HEK293 (cell line): ENCODE measurements at regions of chr1 and their contacts with region 1.

Region 1: DNA sequence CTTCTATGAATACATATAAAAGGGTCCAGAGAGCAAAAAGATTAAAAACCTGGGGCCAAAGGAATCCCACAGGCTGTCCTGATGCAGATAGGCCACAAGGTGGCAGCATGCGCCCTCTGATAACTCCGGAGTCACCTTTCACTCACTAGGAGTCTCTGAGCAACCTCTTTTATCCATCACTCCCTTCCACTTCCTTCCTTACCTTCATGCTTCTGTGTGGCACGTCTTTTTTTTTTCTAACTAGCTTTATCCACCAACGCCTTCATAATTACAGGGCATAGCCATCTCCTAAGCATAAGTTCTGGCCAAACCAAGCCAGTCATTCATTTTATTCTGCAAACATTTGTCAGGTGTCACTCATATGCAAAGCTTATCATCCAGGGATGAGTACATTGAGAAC is 3.9 kb upstream of the PGLYRP4 start:
- H3K4me3 ChIP-seq: no peak overlapping the region
- H3K27ac ChIP-seq: no peak overlapping the region
- H3K4me1 ChIP-seq: no peaks in the 10 kb centered on the region
- CTCF ChIP-seq: peak; percentile 52; the same call in 1 of the 2 replicates

Region 2: GRCh38 chr1:153312570-153313193 is 39.8 kb before region 1 on chr1 and contains the start of gene PGLYRP3:
- CTCF ChIA-PET with region 1: interaction called, 11 read pairs
- POLR2A ChIA-PET with region 1: no interaction called
- H3K4me3 ChIP-seq: no peak within 1 kb of the TSS
- H3K27ac ChIP-seq: no peak within 1 kb of the TSS
- H3K4me1 ChIP-seq: no peaks in the 10 kb centered on the region
- CTCF ChIP-seq: no peak

Region 3: GRCh38 chr1:153365303-153366095 is 13.0 kb after region 1 on chr1:
- CTCF ChIA-PET with region 1: interaction called, 23 read pairs
- POLR2A ChIA-PET with region 1: no interaction called
- H3K4me3 ChIP-seq: no peak overlapping the region
- H3K27ac ChIP-seq: no peak overlapping the region
- H3K4me1 ChIP-seq: no peaks in the 10 kb centered on the region
- CTCF ChIP-seq: no peak

Region 4: GRCh38 chr1:153488731-153489130 is 136.2 kb after region 1 on chr1:
- CTCF ChIA-PET with region 1: interaction called, 259 read pairs
- POLR2A ChIA-PET with region 1: no interaction called
- H3K4me3 ChIP-seq: no peak overlapping the region
- H3K27ac ChIP-seq: no peak overlapping the region
- H3K4me1 ChIP-seq: no peaks in the 10 kb centered on the region; the same call in 1 of the 2 replicates
- CTCF ChIP-seq: no peak

Region 5: GRCh38 chr1:153510984-153511410 is 158.5 kb after region 1 on chr1:
- CTCF ChIA-PET with region 1: interaction called, 17 read pairs
- POLR2A ChIA-PET with region 1: no interaction called
- H3K4me3 ChIP-seq: no peak overlapping the region
- H3K27ac ChIP-seq: no peak overlapping the region
- H3K4me1 ChIP-seq: no peaks in the 10 kb centered on the region
- CTCF ChIP-seq: peak; percentile 86